HEK293T (cell line): ENCODE measurements at regions of chr16 and their contacts with region 1.

Region 1: GRCh38 chr16:67017810-67018488 is 11.0 kb upstream of the CBFB start:
- DNase-seq: peak; percentile 88

Region 2: DNA sequence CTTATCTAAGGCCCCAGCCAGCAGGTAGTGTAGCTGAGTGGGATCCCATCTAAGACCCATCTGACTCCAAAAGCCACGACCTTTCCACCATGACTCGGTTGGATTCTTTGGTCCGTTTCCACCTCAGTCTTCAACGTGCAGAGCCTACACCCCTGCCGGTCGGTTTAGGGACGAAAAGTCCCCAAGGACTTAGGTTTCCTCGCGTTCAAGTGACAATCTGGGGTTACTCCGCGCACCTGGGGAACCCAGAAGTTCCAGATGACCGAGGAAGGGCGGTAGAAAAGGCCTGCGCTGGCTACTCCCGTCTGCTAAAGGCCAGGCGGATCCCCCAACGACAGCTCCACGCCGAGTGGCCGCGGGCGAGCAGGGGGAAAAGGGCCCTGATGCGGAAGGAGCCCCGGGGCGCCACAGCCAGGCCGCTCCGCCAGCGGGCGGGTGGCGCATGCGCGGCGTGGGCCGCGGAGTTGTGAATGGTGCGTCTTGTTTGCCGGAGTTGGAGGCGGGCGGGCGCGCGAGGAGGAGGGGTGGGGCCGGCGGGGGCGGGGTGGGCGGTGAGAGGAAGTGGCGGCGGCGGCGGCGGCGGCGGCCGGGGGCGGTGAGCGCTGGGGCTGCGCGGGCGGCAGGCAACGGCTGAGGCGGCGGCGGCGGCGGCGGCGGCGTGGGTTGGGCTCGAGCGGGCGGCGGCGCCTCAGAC is 10.8 kb after region 1 on chr16 and contains the start of gene CBFB:
- CTCF ChIA-PET with region 1: interaction called, 9 read pairs
- POLR2A ChIA-PET with region 1: interaction called, 15 read pairs
- DNase-seq: peak; percentile 98

Region 3: GRCh38 chr16:67104061-67104460 is 86.1 kb after region 1 on chr16:
- CTCF ChIA-PET with region 1: interaction called, 57 read pairs
- POLR2A ChIA-PET with region 1: interaction called, 5 read pairs
- DNase-seq: peak; percentile 35

Region 4: GRCh38 chr16:67170168-67170947 is 152.4 kb after region 1 on chr16 and contains the start of gene NOL3:
- CTCF ChIA-PET with region 1: interaction called, 13 read pairs
- POLR2A ChIA-PET with region 1: interaction called, 8 read pairs
- DNase-seq: peak; percentile 62